Mammary epithelial cell (primary cell): ENCODE measurements at regions of chr11 and their contacts with region 1.

Region 1: GRCh38 chr11:60924110-60924905 is at the start of gene TMEM132A:
- DNase-seq: peak; percentile 70
- H3K4me3 ChIP-seq: peak within 1 kb of the TSS; percentile 62 to 80 (median 70)
- H3K27ac ChIP-seq: peak within 1 kb of the TSS; percentile 34
- H3K4me1 ChIP-seq: peaks cover 27% of the 10 kb centered on the region
- H3K27me3 ChIP-seq: no peaks in the 10 kb centered on the region
- CTCF ChIP-seq: peak in 1 of 2 donors; percentile 4
- total RNA-seq, gene TMEM132A: 48.7 to 114 TPM

Region 2: GRCh38 chr11:60906132-60906972 is 18.0 kb before region 1 on chr11 and contains the start of gene PRPF19:
- CTCF ChIA-PET with region 1: no interaction called
- dilution Hi-C with region 1: no loop called
- in situ Hi-C with region 1: no loop called
- intact Hi-C with region 1: loop called (anchors 2 kb)
- DNase-seq: peak; percentile 96
- H3K4me3 ChIP-seq: peak within 1 kb of the TSS; percentile 85 to 92 (median 92)
- H3K27ac ChIP-seq: peak within 1 kb of the TSS; percentile 85
- H3K4me1 ChIP-seq: peaks cover 17% of the 10 kb centered on the region
- H3K27me3 ChIP-seq: no peaks in the 10 kb centered on the region
- CTCF ChIP-seq: no peak
- total RNA-seq, gene PRPF19: 70.0 to 93.2 TPM

Region 3: DNA sequence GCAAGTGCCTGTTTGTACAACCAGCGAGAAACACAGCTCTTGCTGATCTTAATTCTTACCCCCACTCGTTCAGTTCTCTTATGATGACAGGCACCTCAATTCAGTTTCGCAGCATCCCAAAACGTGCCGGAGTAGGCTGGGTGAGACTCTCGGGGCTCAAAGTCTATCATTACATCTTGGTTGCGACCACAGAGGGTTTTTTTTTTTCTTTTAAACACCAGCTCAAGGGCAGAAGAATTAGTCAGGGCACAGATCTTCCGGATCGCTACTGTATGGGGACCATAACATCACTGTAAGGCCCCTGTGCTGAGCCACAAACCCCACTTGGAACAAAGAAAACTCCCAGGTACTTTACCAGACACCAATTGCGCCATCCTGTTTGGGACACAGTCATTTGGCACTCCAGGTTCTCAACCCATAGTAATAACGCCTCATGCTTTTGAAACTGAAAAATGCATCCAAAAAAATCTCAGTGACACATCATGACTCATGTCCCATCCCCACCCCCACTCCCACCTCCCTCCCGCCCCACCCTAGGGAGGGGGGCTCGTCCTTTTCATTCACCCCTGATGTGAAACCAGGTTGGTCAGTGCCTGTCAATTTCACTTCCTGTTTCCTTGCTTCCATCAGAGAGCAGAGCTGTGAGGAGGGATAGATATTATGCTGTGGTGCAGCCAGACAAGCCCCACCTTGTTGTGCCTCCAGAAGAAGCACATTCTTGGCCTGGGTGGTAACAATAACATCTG is 136.9 kb after region 1 on chr11:
- CTCF ChIA-PET with region 1: no interaction called
- dilution Hi-C with region 1: no loop called
- in situ Hi-C with region 1: no loop called
- intact Hi-C with region 1: no loop called
- DNase-seq: peak; percentile 79
- H3K4me3 ChIP-seq: peak overlapping the region in 1 of 3 experiments; percentile 2
- H3K27ac ChIP-seq: peak overlapping the region; percentile 61
- H3K4me1 ChIP-seq: peaks cover 15% of the 10 kb centered on the region
- H3K27me3 ChIP-seq: no peaks in the 10 kb centered on the region
- CTCF ChIP-seq: no peak